H1 (cell line): ENCODE measurements at regions of chr13 and their contacts with region 1.

Region 1: GRCh38 chr13:76980075-76980718 is 11.7 kb upstream of the CLN5 start:
- DNase-seq: peak; percentile 74 to 99
- H3K4me3 ChIP-seq: no peak overlapping the region
- H3K27ac ChIP-seq: no peak overlapping the region
- H3K4me1 ChIP-seq: no peaks in the 10 kb centered on the region
- H3K27me3 ChIP-seq: no peaks in the 10 kb centered on the region
- CTCF ChIP-seq: peak; percentile 94 to 97 (median 94)
- EP300 ChIP-seq: peak in 1 of 2 experiments; percentile 41; a peak in 1 of 3 replicates
- POLR2A ChIP-seq: no peak
- RAD21 ChIP-seq: peak; percentile 81 to 88

Region 2: DNA sequence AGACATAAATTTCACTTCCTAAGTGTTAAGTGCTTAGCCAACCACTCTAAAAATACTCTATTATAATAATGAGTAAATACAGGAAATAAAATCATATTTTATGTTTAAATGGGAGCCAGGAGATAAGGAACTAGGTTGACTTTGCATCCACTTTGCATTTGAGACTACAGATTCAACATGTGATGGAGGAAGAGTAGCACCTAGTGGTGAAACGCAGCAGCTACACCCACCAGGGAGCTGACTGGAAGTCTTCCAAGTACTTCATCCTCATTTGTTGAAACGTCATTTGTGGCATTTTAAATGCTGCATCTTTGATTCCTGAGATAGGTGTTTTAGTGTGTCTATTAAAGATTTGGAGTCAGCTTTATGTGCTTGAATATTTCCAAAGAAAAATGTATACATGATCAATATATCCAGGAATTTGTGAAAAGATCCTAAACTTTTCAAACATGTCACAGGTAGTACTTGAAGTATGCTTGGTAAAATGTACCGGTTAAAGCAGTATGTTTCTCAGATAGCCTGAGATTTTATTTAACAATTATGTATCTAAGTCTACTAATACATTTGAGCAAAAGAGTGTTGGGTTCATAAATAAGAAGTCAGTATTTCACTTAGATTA is 76.5 kb before region 1 on chr13:
- CTCF ChIA-PET with region 1: interaction called, 10 read pairs
- POLR2A ChIA-PET with region 1: no interaction called
- DNase-seq: peak; percentile 41 to 75
- H3K4me3 ChIP-seq: no peak overlapping the region
- H3K27ac ChIP-seq: no peak overlapping the region
- H3K4me1 ChIP-seq: no peaks in the 10 kb centered on the region
- H3K27me3 ChIP-seq: no peaks in the 10 kb centered on the region
- CTCF ChIP-seq: peak; percentile 75 to 99 (median 82)
- EP300 ChIP-seq: no peak
- POLR2A ChIP-seq: no peak
- RAD21 ChIP-seq: peak; percentile 98 to 99

Region 3: DNA sequence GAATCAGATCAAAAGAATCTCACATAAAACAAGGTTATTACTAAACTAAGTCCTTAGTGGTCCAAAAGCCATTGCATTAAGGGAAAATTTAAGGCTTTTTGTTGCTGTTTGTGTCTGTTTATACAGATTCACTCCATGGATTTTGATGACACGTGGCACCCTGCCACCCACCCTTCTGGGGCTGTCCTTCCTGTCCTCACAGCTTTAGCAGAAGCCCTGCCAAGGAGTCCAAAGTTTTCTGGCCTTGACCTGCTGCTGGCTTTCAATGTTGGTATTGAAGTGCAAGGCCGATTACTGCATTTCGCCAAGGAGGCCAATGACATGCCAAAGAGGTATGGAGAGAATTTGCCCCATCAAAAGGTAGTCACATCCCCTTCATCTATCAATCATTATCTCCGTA is 25.0 kb before region 1 on chr13:
- CTCF ChIA-PET with region 1: interaction called, 11 read pairs
- POLR2A ChIA-PET with region 1: no interaction called
- DNase-seq: no peak
- H3K4me3 ChIP-seq: no peak overlapping the region
- H3K27ac ChIP-seq: no peak overlapping the region
- H3K4me1 ChIP-seq: no peaks in the 10 kb centered on the region
- H3K27me3 ChIP-seq: peaks cover 0 to 1% (median 0%) of the 10 kb centered on the region in 4 experiments; a peak in 1 of 7 replicates
- CTCF ChIP-seq: no peak
- EP300 ChIP-seq: no peak
- POLR2A ChIP-seq: no peak
- RAD21 ChIP-seq: no peak

Region 4: DNA sequence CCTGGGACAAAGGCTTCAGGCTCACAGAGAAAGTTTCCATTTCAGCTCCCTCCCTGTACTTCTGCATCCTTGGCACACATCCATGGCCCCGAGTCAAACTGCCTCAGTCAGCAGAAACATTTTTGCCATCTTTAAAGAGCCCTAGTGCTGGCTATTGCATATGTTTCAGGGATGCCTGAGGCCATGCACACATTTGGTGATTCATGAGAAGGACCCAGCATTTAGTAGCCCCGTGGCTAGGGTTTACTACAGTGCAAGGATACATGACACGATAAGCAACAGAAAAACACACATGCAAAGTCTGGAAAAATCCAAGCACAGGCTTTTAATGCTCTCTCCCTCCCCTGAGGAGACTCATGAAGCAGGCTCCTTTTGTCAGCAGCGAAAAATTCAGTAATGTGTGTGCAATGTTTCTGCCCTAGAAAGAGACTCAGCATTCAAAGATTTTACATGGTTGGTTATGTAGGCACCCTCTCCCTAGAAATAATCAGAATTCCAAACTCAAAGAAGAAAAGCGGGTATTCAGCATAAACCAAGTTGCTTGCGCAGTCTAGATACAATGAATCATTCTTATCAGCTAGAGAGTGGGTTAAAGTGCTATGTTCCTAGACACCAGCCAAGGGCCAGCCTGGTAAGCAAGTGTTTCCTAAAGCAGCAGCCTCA is 14.3 kb before region 1 on chr13:
- CTCF ChIA-PET with region 1: interaction called, 38 read pairs
- POLR2A ChIA-PET with region 1: no interaction called
- DNase-seq: no peak
- H3K4me3 ChIP-seq: no peak overlapping the region
- H3K27ac ChIP-seq: no peak overlapping the region
- H3K4me1 ChIP-seq: no peaks in the 10 kb centered on the region; a peak in 1 of 7 replicates
- H3K27me3 ChIP-seq: no peaks in the 10 kb centered on the region
- CTCF ChIP-seq: no peak
- EP300 ChIP-seq: no peak
- POLR2A ChIP-seq: no peak
- RAD21 ChIP-seq: no peak

Region 5: GRCh38 chr13:76991796-76992547 is 11.8 kb after region 1 on chr13 and contains the start of gene CLN5:
- CTCF ChIA-PET with region 1: interaction called, 24 read pairs
- POLR2A ChIA-PET with region 1: interaction called, 4 read pairs
- DNase-seq: peak; percentile 78 to 91
- H3K4me3 ChIP-seq: peak within 1 kb of the TSS; percentile 66 to 87 (median 82)
- H3K27ac ChIP-seq: peak within 1 kb of the TSS; percentile 55; the same call in 1 of the 2 replicates
- H3K4me1 ChIP-seq: peaks cover 0 to 8% (median 4%) of the 10 kb centered on the region in 4 experiments; a peak in 4 of 7 replicates
- H3K27me3 ChIP-seq: no peaks in the 10 kb centered on the region; a peak in 1 of 7 replicates
- CTCF ChIP-seq: peak in 1 of 3 experiments; percentile 15; a peak in 1 of 4 replicates
- EP300 ChIP-seq: peak in 1 of 2 experiments; percentile 21; a peak in 1 of 3 replicates
- POLR2A ChIP-seq: peak; percentile 88 to 96
- RAD21 ChIP-seq: peak in 1 of 2 experiments; percentile 8; a peak in 1 of 4 replicates
- total RNA-seq, gene CLN5: 6.5 and 10.1 TPM in 2 replicates

Region 6: DNA sequence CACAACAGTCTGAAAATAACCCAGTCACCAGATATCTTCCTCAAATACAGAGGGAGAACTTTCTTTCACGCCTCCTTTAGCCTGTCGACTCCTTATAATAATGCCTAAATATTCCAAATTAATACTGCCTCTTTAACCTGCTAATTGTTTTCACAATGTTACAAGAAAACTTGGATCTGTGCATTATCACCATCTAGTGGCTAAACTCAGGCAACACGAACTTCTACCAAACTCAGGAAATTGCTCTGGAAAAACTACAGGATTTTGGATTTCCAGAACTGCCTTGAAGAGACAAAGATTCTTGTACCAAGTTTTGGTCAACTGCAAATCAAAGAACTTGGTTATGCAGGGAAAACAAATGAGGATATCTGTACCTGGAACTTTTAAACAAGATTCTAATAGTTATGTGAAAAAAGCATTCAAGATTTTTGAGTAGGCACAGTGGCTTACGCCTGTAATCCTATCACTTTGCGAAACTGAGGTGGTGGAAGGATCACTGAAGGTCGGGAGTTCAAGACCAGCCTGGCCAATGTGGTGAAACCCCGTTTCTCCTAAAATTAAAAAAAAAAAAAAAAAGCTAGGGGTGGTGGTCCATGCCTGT is 22.5 kb after region 1 on chr13:
- CTCF ChIA-PET with region 1: interaction called, 21 read pairs
- POLR2A ChIA-PET with region 1: interaction called, 3 read pairs
- DNase-seq: no peak
- H3K4me3 ChIP-seq: no peak overlapping the region
- H3K27ac ChIP-seq: no peak overlapping the region
- H3K4me1 ChIP-seq: no peaks in the 10 kb centered on the region
- H3K27me3 ChIP-seq: no peaks in the 10 kb centered on the region
- CTCF ChIP-seq: peak in 2 of 3 experiments; percentile 47 to 65; a peak in 2 of 4 replicates
- EP300 ChIP-seq: no peak
- POLR2A ChIP-seq: no peak
- RAD21 ChIP-seq: peak; percentile 47 to 59